GM12878 (cell line): ENCODE measurements at regions of chr11 and their contacts with region 1.

Region 1: GRCh38 chr11:72683782-72684200 is 9.6 kb upstream of the PDE2A start:
- DNase-seq: no peak
- ATAC-seq: peak; percentile 83
- H3K4me3 ChIP-seq: no peak overlapping the region
- H3K27ac ChIP-seq: no peak overlapping the region
- H3K4me1 ChIP-seq: no peaks in the 10 kb centered on the region
- H3K27me3 ChIP-seq: no peaks in the 10 kb centered on the region
- CTCF ChIP-seq: peak; percentile 89 to 99 (median 98)
- EP300 ChIP-seq: no peak
- POLR2A ChIP-seq: peak; percentile 49; the same call in 1 of the 2 replicates
- RAD21 ChIP-seq: peak; percentile 84

Region 2: GRCh38 chr11:71774603-71775222 is 909.1 kb before region 1 on chr11:
- CTCF ChIA-PET with region 1: no interaction called
- POLR2A ChIA-PET with region 1: no interaction called
- RAD21 ChIA-PET with region 1: no interaction called
- SMC1A ChIA-PET with region 1: no interaction called
- in situ Hi-C with region 1: no loop called
- intact Hi-C with region 1: no loop called
- DNase-seq: no peak
- ATAC-seq: no peak
- H3K4me3 ChIP-seq: no peak overlapping the region
- H3K27ac ChIP-seq: no peak overlapping the region
- H3K4me1 ChIP-seq: no peaks in the 10 kb centered on the region
- H3K27me3 ChIP-seq: no peaks in the 10 kb centered on the region
- CTCF ChIP-seq: no peak
- EP300 ChIP-seq: no peak
- POLR2A ChIP-seq: no peak
- RAD21 ChIP-seq: no peak

Region 3: GRCh38 chr11:72635309-72635915 is 48.4 kb before region 1 on chr11:
- CTCF ChIA-PET with region 1: interaction called, 11 read pairs
- POLR2A ChIA-PET with region 1: no interaction called
- RAD21 ChIA-PET with region 1: interaction called, 4 read pairs
- SMC1A ChIA-PET with region 1: no interaction called
- in situ Hi-C with region 1: no loop called
- intact Hi-C with region 1: no loop called
- DNase-seq: no peak
- ATAC-seq: no peak
- H3K4me3 ChIP-seq: no peak overlapping the region
- H3K27ac ChIP-seq: no peak overlapping the region
- H3K4me1 ChIP-seq: no peaks in the 10 kb centered on the region
- H3K27me3 ChIP-seq: peaks cover 2 to 3% of the 10 kb centered on the region in 2 experiments; a peak in 3 of 4 replicates
- CTCF ChIP-seq: no peak
- EP300 ChIP-seq: no peak
- POLR2A ChIP-seq: no peak
- RAD21 ChIP-seq: no peak

Region 4: GRCh38 chr11:72657411-72658100 is 26.2 kb before region 1 on chr11:
- CTCF ChIA-PET with region 1: interaction called, 12 read pairs
- POLR2A ChIA-PET with region 1: no interaction called
- RAD21 ChIA-PET with region 1: interaction called, 4 read pairs
- SMC1A ChIA-PET with region 1: no interaction called
- in situ Hi-C with region 1: no loop called
- intact Hi-C with region 1: no loop called
- DNase-seq: no peak
- ATAC-seq: no peak
- H3K4me3 ChIP-seq: no peak overlapping the region
- H3K27ac ChIP-seq: no peak overlapping the region
- H3K4me1 ChIP-seq: no peaks in the 10 kb centered on the region
- H3K27me3 ChIP-seq: peaks cover 1 to 3% of the 10 kb centered on the region in 2 experiments; a peak in 3 of 4 replicates
- CTCF ChIP-seq: no peak
- EP300 ChIP-seq: no peak
- POLR2A ChIP-seq: no peak
- RAD21 ChIP-seq: no peak

Region 5: GRCh38 chr11:72668611-72669347 is 15.0 kb before region 1 on chr11:
- CTCF ChIA-PET with region 1: interaction called, 37 read pairs
- POLR2A ChIA-PET with region 1: interaction called, 12 read pairs
- RAD21 ChIA-PET with region 1: interaction called, 13 read pairs
- SMC1A ChIA-PET with region 1: interaction called, 20 read pairs
- in situ Hi-C with region 1: no loop called
- intact Hi-C with region 1: no loop called
- DNase-seq: peak; percentile 94
- ATAC-seq: peak; percentile 97
- H3K4me3 ChIP-seq: no peak overlapping the region
- H3K27ac ChIP-seq: peak overlapping the region; percentile 53
- H3K4me1 ChIP-seq: peaks cover 25% of the 10 kb centered on the region
- H3K27me3 ChIP-seq: peaks cover 0 to under 1% of the 10 kb centered on the region in 2 experiments; a peak in 3 of 4 replicates
- CTCF ChIP-seq: no peak
- EP300 ChIP-seq: peak in 1 of 2 experiments; percentile 36; a peak in 1 of 4 replicates
- POLR2A ChIP-seq: no peak
- RAD21 ChIP-seq: no peak

Region 6: GRCh38 chr11:73072901-73073481 is 389.2 kb after region 1 on chr11:
- CTCF ChIA-PET with region 1: no interaction called
- POLR2A ChIA-PET with region 1: no interaction called
- RAD21 ChIA-PET with region 1: no interaction called
- SMC1A ChIA-PET with region 1: no interaction called
- in situ Hi-C with region 1: no loop called
- intact Hi-C with region 1: no loop called
- DNase-seq: peak; percentile 72
- ATAC-seq: peak; percentile 89
- H3K4me3 ChIP-seq: peak overlapping the region; percentile 41
- H3K27ac ChIP-seq: peak overlapping the region; percentile 71
- H3K4me1 ChIP-seq: peaks cover 15% of the 10 kb centered on the region; the same call in 1 of the 2 replicates
- H3K27me3 ChIP-seq: no peaks in the 10 kb centered on the region
- CTCF ChIP-seq: no peak
- EP300 ChIP-seq: peak; percentile 65 to 70; a peak in 2 of 4 replicates
- POLR2A ChIP-seq: 0 out of 2 replicates have a peak, but pooled peaks have one; percentile 31
- RAD21 ChIP-seq: no peak